Posterior cingulate gyrus (tissue), 11 donors: ENCODE measurements at regions of chr22 and their contacts with region 1.

Region 1: GRCh38 chr22:17368554-17369438 is 464 bp upstream of the CECR2 start:
- DNase-seq: peak in 9 of 10 donors; percentile 17 to 92 (median 51)

Region 2: DNA sequence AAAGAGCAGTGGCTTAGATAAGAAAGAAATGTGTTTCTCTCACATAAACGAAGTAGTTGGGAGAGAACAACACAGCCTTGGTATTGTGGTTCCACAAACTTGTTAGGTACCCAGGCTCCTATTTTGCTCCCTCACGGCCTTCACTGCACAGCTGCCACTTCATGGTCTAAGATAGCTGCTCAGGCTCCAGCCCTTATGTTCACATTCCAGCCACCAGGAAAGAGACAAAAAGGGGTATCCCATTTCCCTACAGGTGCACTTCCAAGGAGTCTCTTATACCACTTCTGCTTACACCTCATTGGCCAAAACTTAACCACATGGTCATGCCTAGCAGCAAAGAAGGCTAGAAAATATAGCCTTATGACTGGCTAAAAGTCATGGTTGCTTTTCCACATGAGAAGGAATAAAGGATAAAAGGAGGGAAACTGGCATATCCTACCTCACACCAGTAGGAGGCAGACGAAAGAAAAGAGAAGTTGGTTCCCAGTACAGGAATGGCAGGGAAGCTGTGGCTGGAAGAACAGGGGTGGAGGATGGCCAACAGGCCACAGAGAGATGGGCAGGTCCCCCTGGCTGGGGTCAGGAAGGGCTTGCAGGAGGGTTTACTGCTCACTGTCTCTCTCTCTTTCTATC is 204.3 kb before region 1 on chr22:
- intact Hi-C with region 1: loop called (anchors 10 kb)
- DNase-seq: peak in 2 of 10 donors; percentile 5 to 7

Region 3: GRCh38 chr22:17436382-17436980 is 67.7 kb after region 1 on chr22:
- intact Hi-C with region 1: loop called (anchors 5 kb)
- DNase-seq: no peak

Region 4: DNA sequence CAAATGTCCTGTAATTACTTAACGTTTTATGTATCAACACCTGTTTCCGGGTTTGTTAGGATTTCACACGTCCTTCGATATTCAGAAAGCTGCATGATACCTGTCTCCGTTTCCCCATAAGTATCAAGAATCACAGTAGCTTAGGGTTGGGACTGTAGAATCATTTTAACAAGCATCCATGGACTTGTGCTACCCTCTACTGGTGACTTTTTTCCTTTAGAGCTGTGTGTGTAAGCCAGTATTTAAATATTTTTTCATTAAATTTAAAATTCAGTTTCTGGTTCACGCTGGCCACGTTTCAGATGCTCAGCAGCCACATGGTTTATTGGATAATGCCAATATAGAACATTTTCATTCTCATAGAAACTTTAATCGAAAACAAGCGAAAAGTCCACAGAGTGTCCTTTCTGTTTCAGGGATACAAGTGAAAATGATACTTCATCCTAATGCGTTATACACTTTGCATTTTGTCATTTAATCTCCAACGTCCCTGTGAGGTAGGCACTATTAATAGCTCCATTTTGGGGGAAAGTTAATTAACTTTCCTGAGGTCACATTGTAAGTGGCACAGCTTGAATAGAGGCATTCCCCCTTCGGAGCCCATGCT is 133.0 kb after region 1 on chr22:
- intact Hi-C with region 1: loop called (anchors 1 kb)
- DNase-seq: peak in 1 of 10 donors; percentile 22